ENCODE measurements at regions of chr7 and their contacts with region 1.

Region 1: DNA sequence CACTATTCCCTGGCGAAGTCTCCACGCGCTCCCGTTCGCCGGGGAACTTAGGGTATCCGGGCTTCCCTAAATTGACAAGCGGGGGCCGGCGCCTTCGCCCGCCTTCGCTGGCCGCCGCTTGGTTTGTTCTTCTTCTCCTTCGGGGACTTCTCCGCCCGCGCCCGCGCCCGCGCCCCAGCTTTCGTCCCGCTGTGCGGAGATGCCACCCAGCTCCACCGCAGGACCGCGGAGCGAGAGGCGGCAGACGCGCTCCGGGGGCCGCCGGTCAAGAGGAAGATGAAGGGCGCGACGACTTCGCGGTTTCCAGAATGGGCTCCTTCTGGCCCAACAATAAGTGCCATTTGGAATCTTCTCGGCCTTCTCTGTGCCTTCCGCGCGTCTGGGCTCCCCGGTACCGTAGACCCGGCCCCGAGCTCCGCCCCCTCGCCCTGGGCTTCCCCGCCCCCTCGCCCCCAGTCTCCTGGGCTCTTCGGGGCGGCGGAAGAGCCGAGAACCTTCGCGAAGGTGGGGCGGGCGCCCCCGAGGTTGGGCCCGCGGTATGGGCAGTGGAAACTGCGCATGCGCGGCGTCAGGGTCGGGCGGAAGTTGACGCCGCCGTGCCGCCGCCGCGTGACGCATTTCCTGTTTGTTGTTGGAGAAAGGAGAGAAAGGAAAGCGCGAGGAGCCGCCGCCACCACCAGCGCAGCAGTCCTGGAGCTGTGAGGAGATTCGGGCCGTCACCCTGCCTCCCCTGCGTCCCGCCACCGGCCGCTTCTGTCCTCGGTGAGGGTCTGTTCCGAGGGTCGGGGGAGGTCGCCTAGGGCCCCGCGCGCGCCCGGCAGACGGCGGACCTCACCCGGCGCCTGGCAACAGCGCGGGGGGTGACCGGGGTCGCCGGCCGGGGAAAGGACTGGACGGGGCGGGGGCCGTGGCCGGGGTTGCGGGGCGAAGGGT is at the start of gene DNAJB6:
- DNase-seq: peak; percentile 93 to 95
- ATAC-seq: peak; percentile 90 to 94 (median 92)
- H3K4me3 ChIP-seq: peak within 1 kb of the TSS; percentile 52 to 93 (median 81)
- H3K27ac ChIP-seq: peak within 1 kb of the TSS; percentile 83 to 99 (median 94)
- H3K4me1 ChIP-seq: peaks cover 6 to 48% (median 44%) of the 10 kb centered on the region in 9 donors
- H3K27me3 ChIP-seq: no peaks in the 10 kb centered on the region
- CTCF ChIP-seq: no peak
- total RNA-seq, gene DNAJB6: 144 to 200 (median 188) TPM

Region 2: GRCh38 chr7:156903232-156903909 is 433.3 kb before region 1 on chr7:
- intact Hi-C with region 1: no loop called
- DNase-seq: peak; percentile 24 to 69
- ATAC-seq: peak; percentile 77 to 96 (median 88)
- H3K4me3 ChIP-seq: no peak overlapping the region
- H3K27ac ChIP-seq: peak overlapping the region in 9 of 10 donors; percentile 47 to 76 (median 66)
- H3K4me1 ChIP-seq: peaks cover 0 to 14% (median 4%) of the 10 kb centered on the region in 9 donors
- H3K27me3 ChIP-seq: peaks cover 0 to 12% (median 0%) of the 10 kb centered on the region in 7 donors
- CTCF ChIP-seq: no peak

Region 3: GRCh38 chr7:156949541-156950380 is 386.9 kb before region 1 on chr7 and contains the start of gene NOM1:
- intact Hi-C with region 1: loop called in 1 of 10 experiments (anchors 5 kb)
- DNase-seq: peak; percentile 92 to 93
- ATAC-seq: peak; percentile 95 to 99 (median 98)
- H3K4me3 ChIP-seq: peak within 1 kb of the TSS; percentile 70 to 100 (median 98)
- H3K27ac ChIP-seq: peak within 1 kb of the TSS; percentile 31 to 88 (median 74)
- H3K4me1 ChIP-seq: peaks cover 4 to 33% (median 23%) of the 10 kb centered on the region in 9 donors
- H3K27me3 ChIP-seq: peaks cover 0 to 19% (median 10%) of the 10 kb centered on the region in 7 donors
- CTCF ChIP-seq: peak; percentile 64 to 99 (median 81)
- total RNA-seq, gene NOM1: 6.6 to 13.6 (median 8.9) TPM

Region 4: DNA sequence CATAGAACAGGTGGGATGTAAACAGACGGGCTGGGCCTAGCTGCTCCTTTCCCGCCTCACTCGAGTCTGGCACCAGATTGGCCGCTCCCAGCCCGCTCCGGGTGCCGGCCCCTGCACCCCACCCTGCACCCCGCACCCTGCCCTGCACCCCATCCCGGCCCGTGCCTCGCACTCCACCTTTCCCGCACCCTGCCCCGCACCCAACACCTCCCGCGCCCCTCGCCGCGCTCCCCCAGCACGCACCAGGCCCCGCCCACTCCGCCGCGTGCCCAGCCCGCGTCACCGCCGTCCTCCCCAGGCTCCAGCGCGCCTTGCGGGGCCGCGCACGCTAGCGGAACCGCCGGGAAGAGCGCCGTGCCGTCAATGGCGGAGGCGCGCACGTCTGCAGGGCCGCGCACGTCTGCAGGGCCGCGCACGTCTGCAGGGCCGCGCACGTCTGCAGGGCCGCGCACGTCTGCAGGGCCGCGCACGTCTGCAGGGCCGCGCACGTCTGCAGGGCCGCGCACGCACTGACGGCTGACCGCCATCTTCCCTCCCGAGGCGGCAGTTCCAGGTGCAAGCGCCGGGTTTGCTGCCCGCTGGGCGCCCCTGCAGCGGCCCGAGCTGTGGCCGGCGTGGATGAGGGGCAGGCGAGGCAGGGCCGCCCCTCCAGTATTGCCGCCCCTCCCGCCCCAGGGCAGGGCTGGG is 198.1 kb before region 1 on chr7 and contains the start of gene UBE3C:
- intact Hi-C with region 1: loop called in 2 of 10 experiments (anchors 5 kb)
- DNase-seq: peak; percentile 90 to 94
- ATAC-seq: peak; percentile 95 to 97 (median 96)
- H3K4me3 ChIP-seq: peak within 1 kb of the TSS; percentile 64 to 89 (median 82)
- H3K27ac ChIP-seq: peak within 1 kb of the TSS; percentile 80 to 96 (median 88)
- H3K4me1 ChIP-seq: peaks cover 4 to 46% (median 29%) of the 10 kb centered on the region in 9 donors
- H3K27me3 ChIP-seq: no peaks in the 10 kb centered on the region
- CTCF ChIP-seq: peak in 2 of 9 donors; percentile 8 to 10
- total RNA-seq, gene UBE3C: 39.0 to 53.8 (median 49.1) TPM

Region 5: GRCh38 chr7:157386979-157387800 is 50.5 kb after region 1 on chr7:
- intact Hi-C with region 1: loop called in 5 of 10 experiments (anchors 2 to 5 kb)
- DNase-seq: peak; percentile 79 to 89
- ATAC-seq: peak; percentile 76 to 93 (median 88)
- H3K4me3 ChIP-seq: no peak overlapping the region
- H3K27ac ChIP-seq: peak overlapping the region; percentile 28 to 76 (median 58)
- H3K4me1 ChIP-seq: peaks cover 0 to 59% (median 44%) of the 10 kb centered on the region in 9 donors
- H3K27me3 ChIP-seq: no peaks in the 10 kb centered on the region
- CTCF ChIP-seq: peak; percentile 88 to 97 (median 93)

Measured in heart right ventricle (tissue), 16 donors.